ENCODE measurements at regions of chr2 and their contacts with region 1.

Region 1: GRCh38 chr2:9984217-9984739 is 32.8 kb downstream of the GRHL1 start:
- DNase-seq: no peak
- H3K4me3 ChIP-seq: no peak overlapping the region
- H3K27ac ChIP-seq: peak overlapping the region; percentile 65 to 76
- H3K4me1 ChIP-seq: peaks cover 9 to 24% of the 10 kb centered on the region in 2 donors
- H3K27me3 ChIP-seq: no peaks in the 10 kb centered on the region
- CTCF ChIP-seq: peak; percentile 80 to 87 (median 83)

Region 2: DNA sequence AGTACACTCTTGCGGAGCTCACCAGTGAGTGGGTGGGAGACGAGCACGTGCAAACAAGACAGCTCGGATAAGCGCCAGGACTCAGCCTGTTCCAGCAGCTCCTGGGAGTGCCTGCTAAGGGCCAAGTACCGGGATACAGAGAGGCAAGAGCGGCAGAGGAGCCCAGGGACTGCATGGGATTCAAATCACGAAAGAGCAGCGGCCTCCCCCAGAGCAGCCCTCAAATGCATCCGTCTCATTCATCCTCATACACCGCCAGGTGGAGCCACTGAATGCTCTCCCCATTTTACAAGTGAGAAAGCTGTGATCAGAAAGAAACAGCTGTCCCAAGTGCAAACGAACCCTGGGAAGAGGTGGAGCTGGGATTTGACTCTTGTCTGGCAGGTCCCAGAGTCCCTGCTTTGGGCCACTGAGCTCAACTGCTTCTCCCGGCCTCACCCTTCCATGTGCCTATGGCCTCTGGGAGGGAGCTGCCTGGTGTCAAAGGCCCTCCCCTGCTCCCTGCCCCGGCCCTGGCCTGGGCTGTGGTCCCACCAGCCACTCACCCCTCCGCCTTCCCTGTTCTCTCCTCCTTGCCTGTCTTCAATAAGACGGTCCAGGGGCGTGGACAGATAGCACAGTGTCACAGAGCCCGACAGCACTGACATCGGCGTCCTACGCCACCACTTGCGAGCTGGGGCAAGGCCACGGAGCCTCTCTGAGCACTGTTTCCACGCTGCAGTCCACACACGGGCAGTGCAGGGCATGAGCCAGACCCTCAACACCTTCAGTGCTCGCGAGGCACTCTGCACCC is 213.8 kb before region 1 on chr2:
- intact Hi-C with region 1: no loop called
- DNase-seq: peak in 1 of 2 donors; percentile 78
- H3K4me3 ChIP-seq: no peak overlapping the region
- H3K27ac ChIP-seq: no peak overlapping the region
- H3K4me1 ChIP-seq: peaks cover 3 to 4% of the 10 kb centered on the region in 2 donors
- H3K27me3 ChIP-seq: no peaks in the 10 kb centered on the region
- CTCF ChIP-seq: peak; percentile 31 to 63 (median 51)

Region 3: DNA sequence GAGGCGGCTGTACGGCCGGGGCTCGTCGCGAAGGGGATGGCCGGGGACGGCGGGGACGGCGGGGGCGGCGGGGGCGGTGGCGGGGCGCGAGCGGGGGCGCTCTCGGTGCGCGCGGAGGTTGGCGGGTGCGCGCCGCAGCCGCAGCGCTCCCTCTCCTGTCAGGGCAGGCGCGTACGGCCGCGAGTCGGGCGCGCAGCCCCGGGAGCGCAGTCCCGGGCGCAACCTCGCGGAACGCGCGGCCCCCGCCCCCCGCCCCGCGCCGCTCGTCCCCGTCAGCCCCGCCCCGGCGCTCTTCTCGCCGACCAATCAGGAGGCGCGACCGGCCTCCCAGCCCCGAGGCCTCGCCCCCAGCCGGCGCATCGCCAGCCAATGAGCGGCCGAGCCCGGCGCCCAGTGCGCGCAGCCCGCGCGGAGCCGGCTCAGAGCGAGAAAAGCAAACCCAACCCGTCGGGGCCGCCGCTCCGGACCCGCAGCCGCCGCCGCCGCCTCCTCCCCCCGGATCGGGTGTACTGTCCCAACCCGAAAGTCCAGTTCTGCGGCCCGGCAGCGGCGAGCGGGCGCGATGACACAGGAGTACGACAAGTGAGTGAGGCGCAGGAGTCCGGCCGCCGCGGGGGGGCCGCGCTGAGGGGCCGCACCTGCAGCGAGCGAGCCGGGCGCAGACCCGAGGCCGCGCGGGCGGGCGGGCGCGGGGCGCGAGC is 32.9 kb before region 1 on chr2 and contains the start of gene GRHL1:
- intact Hi-C with region 1: loop called (anchors 2 kb)
- DNase-seq: peak; percentile 45 to 94
- H3K4me3 ChIP-seq: peak within 1 kb of the TSS; percentile 85 to 96
- H3K27ac ChIP-seq: no peak within 1 kb of the TSS
- H3K4me1 ChIP-seq: peaks cover 4 to 10% of the 10 kb centered on the region in 2 donors
- H3K27me3 ChIP-seq: no peaks in the 10 kb centered on the region
- CTCF ChIP-seq: no peak
- total RNA-seq, gene GRHL1: 0.43 TPM

Region 4: DNA sequence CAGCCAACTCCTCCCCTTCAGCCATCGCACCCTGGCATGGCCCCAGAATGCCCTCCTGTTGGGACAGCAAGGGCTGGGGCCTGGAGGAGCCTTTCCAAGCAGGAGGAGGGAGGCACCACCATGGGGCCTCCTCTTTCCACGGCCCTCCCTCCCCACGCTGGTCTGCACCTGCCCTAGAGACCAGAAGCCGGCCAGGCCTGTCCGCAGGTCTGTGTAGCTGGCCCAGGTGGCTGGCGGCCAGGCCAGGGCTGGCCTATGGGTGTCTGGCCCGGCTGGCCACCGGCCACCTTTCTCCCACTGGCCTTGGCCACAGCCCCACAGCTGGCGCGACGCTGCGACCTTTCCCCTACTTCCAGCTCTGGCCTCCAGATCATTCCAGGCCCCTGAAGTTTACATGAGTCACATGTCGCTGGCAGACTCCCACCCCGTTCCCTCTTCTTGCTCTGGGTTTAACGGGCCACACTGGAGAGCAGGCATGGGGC is 25.6 kb after region 1 on chr2:
- intact Hi-C with region 1: loop called (anchors 1 kb)
- DNase-seq: peak; percentile 26 to 93
- H3K4me3 ChIP-seq: no peak overlapping the region
- H3K27ac ChIP-seq: peak overlapping the region; percentile 55 to 76
- H3K4me1 ChIP-seq: peaks cover 13 to 44% of the 10 kb centered on the region in 2 donors
- H3K27me3 ChIP-seq: no peaks in the 10 kb centered on the region
- CTCF ChIP-seq: no peak

Region 5: GRCh38 chr2:10036095-10036884 is 52.0 kb after region 1 on chr2:
- intact Hi-C with region 1: loop called (anchors 2 kb)
- DNase-seq: peak; percentile 77 to 95
- H3K4me3 ChIP-seq: peak overlapping the region in 1 of 2 donors; percentile 15
- H3K27ac ChIP-seq: peak overlapping the region; percentile 85 to 90
- H3K4me1 ChIP-seq: peaks cover 16 to 42% of the 10 kb centered on the region in 2 donors
- H3K27me3 ChIP-seq: no peaks in the 10 kb centered on the region
- CTCF ChIP-seq: peak; percentile 74 to 76 (median 75)

Region 6: DNA sequence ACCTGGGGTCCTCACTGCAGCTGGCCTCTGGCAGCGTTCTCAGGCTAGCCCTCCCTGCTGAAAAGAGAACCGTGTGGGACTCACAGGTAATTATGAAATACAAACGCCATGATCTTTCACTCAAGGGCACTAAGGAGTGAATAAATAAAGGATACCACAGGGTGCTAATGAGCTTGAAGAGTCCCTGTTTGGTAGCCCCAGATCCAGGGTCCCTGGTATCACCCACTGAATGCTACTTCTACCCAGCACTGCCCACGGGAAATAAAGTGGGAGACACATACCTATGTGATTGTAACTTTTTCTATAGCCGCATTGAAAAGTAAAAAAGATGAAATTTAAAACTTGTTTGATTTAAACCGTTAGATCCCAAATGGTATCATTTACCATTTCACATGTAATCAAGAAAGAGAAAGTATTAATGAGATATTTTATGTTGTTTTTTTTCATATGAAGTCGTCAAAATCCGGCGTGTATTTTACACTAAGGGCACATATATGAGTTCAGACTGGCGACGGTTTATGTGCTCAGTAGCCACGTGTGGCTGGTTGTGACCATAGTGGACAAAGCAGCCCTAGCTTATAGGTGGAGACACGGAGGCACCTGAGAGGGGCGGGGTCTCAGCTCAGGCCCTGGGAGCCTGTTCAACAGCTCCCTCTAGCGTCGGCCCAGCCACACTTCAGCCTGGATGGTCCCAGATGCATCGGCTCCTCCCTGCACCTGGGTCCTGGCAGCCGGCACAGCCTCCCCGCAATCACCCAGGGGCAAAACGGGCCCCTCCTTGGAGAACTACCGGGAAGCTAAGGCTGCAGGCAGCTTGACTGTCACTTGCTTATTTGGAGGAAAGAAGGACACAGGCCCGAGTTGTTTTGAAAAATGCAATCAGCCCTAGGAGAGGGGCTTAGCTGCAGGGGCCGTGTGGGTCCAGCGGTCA is 424.6 kb after region 1 on chr2:
- intact Hi-C with region 1: loop called (anchors 5 kb)
- DNase-seq: peak in 1 of 2 donors; percentile 86
- H3K4me3 ChIP-seq: no peak overlapping the region
- H3K27ac ChIP-seq: peak overlapping the region in 1 of 2 donors; percentile 52
- H3K4me1 ChIP-seq: peaks cover 24 to 43% of the 10 kb centered on the region in 2 donors
- H3K27me3 ChIP-seq: no peaks in the 10 kb centered on the region
- CTCF ChIP-seq: peak; percentile 91 to 94 (median 91)